Activated T-helper 1 cell treated with anti-CD3 and anti-CD28 coated beads, Interleukin-12 subunit alpha, Interleukin-12 subunit beta, Interleukin-2, Interleukin-4 antibody, amounts not matched to agents 30 ng/mL and 10 ng/mL and 1 ng/mL, durations not matched to agents 14 hours and 24 hours and 36 hours (primary cell): ENCODE measurements at regions of chr12 and their contacts with region 1.

Region 1: GRCh38 chr12:89756585-89757321 is 48.1 kb upstream of the ATP2B1 start:
- DNase-seq: peak; percentile 35
- H3K4me3 Mint-ChIP-seq: peak overlapping the region; percentile 3
- H3K27ac Mint-ChIP-seq: peak overlapping the region; percentile 81
- H3K4me1 Mint-ChIP-seq: peaks cover 29% of the 10 kb centered on the region
- H3K27me3 Mint-ChIP-seq: no peaks in the 10 kb centered on the region

Region 2: DNA sequence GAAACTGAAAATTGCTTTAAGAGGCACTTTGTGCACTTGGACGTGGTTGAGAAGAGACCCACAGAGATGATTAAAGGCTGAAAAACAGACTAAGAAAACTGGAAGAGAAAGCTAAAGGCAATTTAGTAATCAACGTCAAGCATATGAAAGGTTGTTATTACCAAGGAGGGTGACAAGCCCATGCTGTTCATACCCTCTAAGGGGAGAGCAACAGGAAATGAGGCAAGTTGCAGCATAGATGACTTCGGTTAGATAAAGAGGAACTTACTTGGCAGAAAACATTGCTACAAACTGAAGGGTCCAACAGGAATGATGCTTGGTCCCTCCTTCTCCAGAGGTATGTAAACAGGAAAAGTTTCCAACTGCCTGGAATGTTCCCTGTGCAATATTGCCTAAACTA is 512.2 kb before region 1 on chr12:
- intact Hi-C with region 1: loop called (anchors 5 kb)
- DNase-seq: peak; percentile 45
- H3K4me3 Mint-ChIP-seq: peak overlapping the region; percentile 32
- H3K27ac Mint-ChIP-seq: peak overlapping the region; percentile 84
- H3K4me1 Mint-ChIP-seq: peaks cover 53% of the 10 kb centered on the region
- H3K27me3 Mint-ChIP-seq: no peaks in the 10 kb centered on the region

Region 3: DNA sequence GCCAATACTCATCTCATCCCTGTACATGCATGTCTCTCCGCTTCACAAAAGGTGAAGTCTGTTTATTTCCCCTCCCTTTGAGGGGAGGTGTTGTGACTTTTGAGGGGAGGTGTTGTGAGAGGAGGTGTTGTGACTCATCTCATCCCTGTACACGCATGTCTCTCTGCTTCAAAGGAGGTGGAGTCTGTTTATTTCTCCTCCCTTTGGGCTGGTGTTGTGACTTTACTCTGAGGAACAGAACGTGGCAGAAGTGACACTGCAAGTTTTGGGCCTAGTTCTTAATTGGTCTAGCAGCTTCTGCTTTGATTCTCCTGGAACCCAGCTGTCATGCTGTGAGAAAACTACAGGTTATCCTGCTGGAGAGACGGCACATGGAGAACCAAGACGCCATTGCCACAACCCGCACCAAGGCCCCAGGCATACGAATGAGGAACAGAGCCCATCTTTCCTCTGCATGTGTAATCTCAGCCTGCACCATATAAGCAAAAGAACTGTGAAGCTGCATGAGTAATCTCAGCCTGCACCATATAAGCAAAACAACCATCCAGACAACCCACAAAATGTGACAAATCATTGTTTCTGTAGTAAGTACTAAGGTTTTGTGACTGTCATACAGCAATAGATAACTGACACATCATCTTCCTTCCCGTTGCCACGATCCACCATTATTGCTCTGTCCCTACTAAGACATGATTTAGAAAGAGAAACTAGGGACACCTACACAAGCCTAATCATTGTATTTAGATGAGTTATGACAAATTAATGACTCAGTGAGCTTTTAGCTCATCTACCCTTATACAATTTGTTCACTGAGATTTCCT is 262.1 kb before region 1 on chr12:
- intact Hi-C with region 1: loop called (anchors 1 kb)
- DNase-seq: peak; percentile 16
- H3K4me3 Mint-ChIP-seq: peak overlapping the region; percentile 50
- H3K27ac Mint-ChIP-seq: peak overlapping the region; percentile 92
- H3K4me1 Mint-ChIP-seq: peaks cover 34% of the 10 kb centered on the region
- H3K27me3 Mint-ChIP-seq: no peaks in the 10 kb centered on the region

Region 4: DNA sequence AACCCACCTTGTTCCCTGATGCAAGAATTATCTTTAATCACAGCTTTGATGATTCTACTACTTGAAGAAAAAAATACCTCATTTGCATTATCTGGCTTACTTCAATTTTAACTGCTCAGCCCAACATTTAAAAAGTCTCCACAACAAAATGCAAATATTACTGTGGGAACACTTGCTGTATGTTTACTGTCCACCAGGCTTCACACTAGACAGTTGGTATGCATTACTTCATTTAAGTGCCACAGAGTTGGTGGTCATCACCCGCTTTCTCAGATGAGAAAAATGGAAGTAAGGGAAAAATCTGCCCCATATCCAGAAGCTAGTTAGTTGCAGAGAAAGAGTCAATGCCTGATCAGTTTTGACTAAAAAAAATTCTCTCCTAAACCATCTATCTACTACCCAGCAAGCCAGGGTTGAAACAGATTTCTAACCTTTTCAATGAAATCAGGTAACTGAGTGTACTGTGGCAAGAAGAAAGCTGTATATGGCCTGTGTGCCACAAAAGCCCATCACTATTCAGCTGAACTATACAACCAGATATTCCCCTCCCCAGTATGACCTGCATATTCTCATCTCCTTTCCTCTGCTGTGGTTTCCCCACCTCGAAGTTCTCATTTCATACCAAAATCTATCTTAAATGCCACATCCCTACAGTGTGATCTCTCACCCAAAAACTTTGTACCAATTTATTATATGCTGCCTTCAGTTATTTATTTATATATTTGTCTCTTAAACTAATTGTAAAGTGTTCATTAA is 138.5 kb before region 1 on chr12:
- intact Hi-C with region 1: no loop called
- DNase-seq: no peak
- H3K4me3 Mint-ChIP-seq: no peak overlapping the region
- H3K27ac Mint-ChIP-seq: no peak overlapping the region
- H3K4me1 Mint-ChIP-seq: no peaks in the 10 kb centered on the region
- H3K27me3 Mint-ChIP-seq: no peaks in the 10 kb centered on the region

Region 5: GRCh38 chr12:89768586-89769486 is 12.1 kb after region 1 on chr12:
- intact Hi-C with region 1: loop called (anchors 1 kb)
- DNase-seq: no peak
- H3K4me3 Mint-ChIP-seq: no peak overlapping the region
- H3K27ac Mint-ChIP-seq: no peak overlapping the region
- H3K4me1 Mint-ChIP-seq: peaks cover 15% of the 10 kb centered on the region
- H3K27me3 Mint-ChIP-seq: no peaks in the 10 kb centered on the region

Region 6: GRCh38 chr12:89862511-89863179 is 105.9 kb after region 1 on chr12:
- intact Hi-C with region 1: loop called (anchors 1 kb)
- DNase-seq: peak; percentile 44
- H3K4me3 Mint-ChIP-seq: peak overlapping the region; percentile 76
- H3K27ac Mint-ChIP-seq: peak overlapping the region; percentile 95
- H3K4me1 Mint-ChIP-seq: peaks cover 60% of the 10 kb centered on the region
- H3K27me3 Mint-ChIP-seq: no peaks in the 10 kb centered on the region

Region 7: GRCh38 chr12:89949457-89950195 is 192.9 kb after region 1 on chr12:
- intact Hi-C with region 1: loop called (anchors 1 kb)
- DNase-seq: peak; percentile 51
- H3K4me3 Mint-ChIP-seq: no peak overlapping the region
- H3K27ac Mint-ChIP-seq: no peak overlapping the region
- H3K4me1 Mint-ChIP-seq: peaks cover 33% of the 10 kb centered on the region
- H3K27me3 Mint-ChIP-seq: no peaks in the 10 kb centered on the region

Region 8: DNA sequence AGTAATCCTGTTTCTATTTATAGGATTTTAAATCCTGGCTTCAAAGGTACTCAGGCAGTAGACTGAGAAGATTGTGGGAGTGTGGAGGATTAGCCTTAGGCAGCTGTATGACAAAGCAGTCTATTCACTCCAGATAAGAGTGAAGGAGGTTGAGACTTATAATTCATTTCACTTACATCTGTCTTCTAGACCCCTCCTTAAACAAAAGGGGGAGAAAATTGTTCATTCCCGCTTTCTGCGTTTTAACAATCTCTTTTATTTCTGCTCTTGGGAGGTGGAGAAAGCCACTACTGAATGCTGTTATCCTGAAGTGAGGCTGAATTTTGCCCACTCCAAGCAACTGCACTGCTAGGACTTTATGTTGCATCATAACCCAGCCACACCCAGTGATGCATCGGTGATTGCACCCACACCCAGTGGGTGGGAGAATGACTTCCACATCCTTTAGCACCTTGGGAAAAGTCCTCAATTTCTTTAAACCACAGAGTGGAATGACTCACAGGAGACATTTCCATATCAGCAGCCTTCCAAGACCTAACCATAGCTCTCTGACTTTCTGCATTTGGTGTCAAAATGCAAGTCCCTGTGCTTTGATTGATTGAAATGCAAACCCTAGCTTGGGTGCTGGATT is 334.4 kb after region 1 on chr12:
- intact Hi-C with region 1: loop called (anchors 2 kb)
- DNase-seq: no peak
- H3K4me3 Mint-ChIP-seq: no peak overlapping the region
- H3K27ac Mint-ChIP-seq: no peak overlapping the region
- H3K4me1 Mint-ChIP-seq: peaks cover 16% of the 10 kb centered on the region
- H3K27me3 Mint-ChIP-seq: no peaks in the 10 kb centered on the region